ENCODE measurements at regions of chr11 and their contacts with region 1.

Region 1: GRCh38 chr11:35391922-35392813 is 27.2 kb downstream of the SLC1A2 start:
- DNase-seq: peak; percentile 84
- ATAC-seq: peak; percentile 90
- H3K4me3 ChIP-seq: no peak overlapping the region
- H3K27ac ChIP-seq: peak overlapping the region; percentile 81; the same call in 1 of the 2 replicates
- H3K4me1 ChIP-seq: peaks cover 8% of the 10 kb centered on the region
- H3K27me3 ChIP-seq: no peaks in the 10 kb centered on the region
- CTCF ChIP-seq: peak; percentile 91
- POLR2A ChIP-seq: 0 out of 2 replicates have a peak, but pooled peaks have one; percentile 32
- RAD21 ChIP-seq: peak; percentile 98

Region 2: GRCh38 chr11:34366522-34366921 is 1025.6 kb before region 1 on chr11:
- CTCF ChIA-PET with region 1: no interaction called
- POLR2A ChIA-PET with region 1: no interaction called
- dilution Hi-C with region 1: no loop called
- in situ Hi-C with region 1: no loop called
- intact Hi-C with region 1: loop called (anchors 10 kb)
- DNase-seq: no peak
- ATAC-seq: no peak
- H3K4me3 ChIP-seq: no peak overlapping the region
- H3K27ac ChIP-seq: no peak overlapping the region
- H3K4me1 ChIP-seq: no peaks in the 10 kb centered on the region
- H3K27me3 ChIP-seq: peaks cover 19% of the 10 kb centered on the region
- CTCF ChIP-seq: 0 out of 2 replicates have a peak, but pooled peaks have one; percentile 16
- POLR2A ChIP-seq: no peak
- RAD21 ChIP-seq: no peak

Region 3: DNA sequence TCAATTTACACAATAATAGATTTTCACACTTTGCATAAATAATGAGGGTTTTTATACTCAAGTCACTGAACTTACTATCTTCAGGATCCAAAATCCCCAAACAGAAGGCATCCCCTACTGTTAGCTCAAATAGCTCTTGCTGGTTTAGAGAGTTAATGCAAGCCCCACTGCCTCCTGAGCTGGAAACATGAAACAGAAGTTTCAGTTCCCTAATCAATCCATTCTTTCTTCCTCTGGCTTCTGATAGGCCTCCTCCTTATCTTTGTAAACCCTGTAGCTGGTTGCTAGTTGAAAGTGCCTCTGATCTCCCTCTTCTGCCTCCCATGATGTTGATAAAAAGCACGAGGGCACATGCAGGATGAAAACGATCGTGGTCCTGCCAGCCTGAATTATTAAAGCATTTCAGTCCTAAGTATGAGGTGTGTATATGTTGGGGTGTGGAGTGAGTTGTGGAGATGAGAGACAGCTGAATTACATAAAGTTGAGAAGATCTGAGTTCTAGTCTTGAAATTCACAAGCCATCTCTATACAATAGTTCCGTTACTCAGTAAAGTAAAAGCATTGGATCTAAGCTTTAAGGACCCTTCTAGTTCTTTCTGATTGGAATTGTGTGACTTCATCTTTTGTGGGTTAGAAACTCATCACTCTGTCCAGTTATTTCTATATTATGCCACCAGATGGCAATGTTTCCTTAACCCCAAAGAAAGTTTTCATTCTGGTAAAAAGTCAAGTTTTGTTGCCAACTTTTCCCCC is 806.3 kb before region 1 on chr11:
- CTCF ChIA-PET with region 1: no interaction called
- POLR2A ChIA-PET with region 1: no interaction called
- dilution Hi-C with region 1: no loop called
- in situ Hi-C with region 1: no loop called
- intact Hi-C with region 1: loop called (anchors 1 kb)
- DNase-seq: peak; percentile 71
- ATAC-seq: peak; percentile 94
- H3K4me3 ChIP-seq: no peak overlapping the region
- H3K27ac ChIP-seq: no peak overlapping the region
- H3K4me1 ChIP-seq: peaks cover 4% of the 10 kb centered on the region
- H3K27me3 ChIP-seq: peaks cover 7% of the 10 kb centered on the region
- CTCF ChIP-seq: peak; percentile 79
- POLR2A ChIP-seq: no peak
- RAD21 ChIP-seq: peak; percentile 91

Region 4: DNA sequence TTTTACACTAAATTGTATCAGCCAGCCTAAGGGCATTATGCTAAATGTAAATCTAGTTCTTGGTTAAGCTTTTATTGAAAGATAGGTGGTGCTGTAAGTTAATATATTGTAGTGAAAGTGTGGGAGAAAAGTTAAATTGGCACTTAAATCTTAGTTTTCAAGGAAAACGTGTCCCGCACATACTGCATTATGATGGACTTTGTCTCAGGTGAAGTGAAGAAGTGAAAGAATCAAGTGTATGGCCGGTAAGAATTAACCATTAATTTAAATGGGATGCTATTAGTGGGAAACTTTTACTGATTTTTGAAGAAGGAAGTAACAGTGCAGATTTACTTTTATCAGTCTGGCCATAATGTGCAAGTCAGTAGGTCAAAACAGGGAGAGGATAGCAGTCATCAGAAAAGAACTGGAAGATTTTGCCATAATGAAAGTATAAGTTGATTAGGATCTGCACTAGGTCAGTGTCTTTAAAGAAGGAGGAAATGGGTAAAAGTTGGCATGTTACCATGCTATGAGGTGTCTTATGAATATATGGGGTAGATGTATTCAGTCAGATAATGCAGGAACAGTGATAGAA is 394.1 kb before region 1 on chr11:
- CTCF ChIA-PET with region 1: no interaction called
- POLR2A ChIA-PET with region 1: no interaction called
- dilution Hi-C with region 1: no loop called
- in situ Hi-C with region 1: no loop called
- intact Hi-C with region 1: loop called (anchors 1 kb)
- DNase-seq: peak; percentile 58
- ATAC-seq: peak; percentile 63
- H3K4me3 ChIP-seq: no peak overlapping the region
- H3K27ac ChIP-seq: no peak overlapping the region
- H3K4me1 ChIP-seq: peaks cover 2% of the 10 kb centered on the region
- H3K27me3 ChIP-seq: no peaks in the 10 kb centered on the region
- CTCF ChIP-seq: peak; percentile 63
- POLR2A ChIP-seq: no peak
- RAD21 ChIP-seq: peak; percentile 74

Region 5: GRCh38 chr11:35151241-35151640 is 240.9 kb before region 1 on chr11:
- CTCF ChIA-PET with region 1: no interaction called
- POLR2A ChIA-PET with region 1: no interaction called
- dilution Hi-C with region 1: no loop called
- in situ Hi-C with region 1: no loop called
- intact Hi-C with region 1: no loop called
- DNase-seq: no peak
- ATAC-seq: peak; percentile 18; the same call in 1 of the 2 replicates
- H3K4me3 ChIP-seq: no peak overlapping the region
- H3K27ac ChIP-seq: peak overlapping the region; percentile 14; the same call in 1 of the 2 replicates
- H3K4me1 ChIP-seq: peaks cover 27% of the 10 kb centered on the region
- H3K27me3 ChIP-seq: no peaks in the 10 kb centered on the region
- CTCF ChIP-seq: no peak
- POLR2A ChIP-seq: no peak
- RAD21 ChIP-seq: no peak

Region 6: DNA sequence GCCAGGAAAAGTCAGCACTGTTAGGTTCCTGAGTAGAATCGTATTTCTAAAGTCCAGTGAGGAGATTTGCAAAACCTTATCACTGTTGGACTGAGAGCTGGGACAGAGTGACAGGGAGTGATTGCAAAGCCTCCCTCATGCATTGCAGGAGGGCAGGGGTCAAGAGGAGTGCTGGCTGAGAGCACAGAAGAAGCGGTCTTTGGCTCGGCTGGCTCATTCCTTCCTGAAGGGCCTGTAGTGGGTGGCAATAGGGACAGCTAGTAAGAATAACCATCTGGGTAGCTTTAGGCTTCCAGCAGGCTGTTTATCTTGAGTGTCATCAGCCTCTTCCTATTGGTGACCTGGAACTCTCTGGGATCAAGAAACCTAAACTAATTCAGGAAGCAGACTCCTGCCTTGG is 199.8 kb before region 1 on chr11:
- CTCF ChIA-PET with region 1: no interaction called
- POLR2A ChIA-PET with region 1: no interaction called
- dilution Hi-C with region 1: no loop called
- in situ Hi-C with region 1: no loop called
- intact Hi-C with region 1: loop called (anchors 10 kb)
- DNase-seq: peak; percentile 38
- ATAC-seq: peak; percentile 45
- H3K4me3 ChIP-seq: no peak overlapping the region
- H3K27ac ChIP-seq: peak overlapping the region; percentile 64
- H3K4me1 ChIP-seq: peaks cover 28% of the 10 kb centered on the region
- H3K27me3 ChIP-seq: no peaks in the 10 kb centered on the region
- CTCF ChIP-seq: no peak
- POLR2A ChIP-seq: no peak
- RAD21 ChIP-seq: no peak

Region 7: DNA sequence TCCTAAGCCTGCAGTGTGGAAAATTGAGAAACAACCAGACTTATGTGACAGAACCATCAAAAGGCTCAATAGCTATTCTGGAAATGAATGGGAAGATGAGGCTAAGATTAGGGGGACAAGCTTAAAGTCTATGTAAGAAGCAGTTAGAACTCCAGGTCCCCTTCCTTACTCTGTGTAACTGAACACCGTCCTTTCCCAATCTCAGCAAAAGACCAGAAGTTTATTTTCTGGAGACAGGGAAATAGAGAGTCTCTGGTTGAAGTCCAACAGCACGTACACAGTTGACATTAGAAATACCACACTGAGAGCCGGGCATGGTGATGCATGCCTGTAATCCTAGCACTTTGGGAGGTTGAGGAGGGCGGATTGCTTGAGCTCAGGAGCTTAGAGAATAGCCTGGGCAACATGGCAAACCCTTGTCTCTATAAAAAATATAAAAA is 159.3 kb before region 1 on chr11:
- CTCF ChIA-PET with region 1: interaction called, 4 read pairs
- POLR2A ChIA-PET with region 1: no interaction called
- dilution Hi-C with region 1: no loop called
- in situ Hi-C with region 1: loop called (anchors 10 kb)
- intact Hi-C with region 1: loop called (anchors 2 kb)
- DNase-seq: peak; percentile 83
- ATAC-seq: peak; percentile 62
- H3K4me3 ChIP-seq: no peak overlapping the region
- H3K27ac ChIP-seq: peak overlapping the region; percentile 86
- H3K4me1 ChIP-seq: peaks cover 16% of the 10 kb centered on the region
- H3K27me3 ChIP-seq: no peaks in the 10 kb centered on the region
- CTCF ChIP-seq: no peak
- POLR2A ChIP-seq: no peak
- RAD21 ChIP-seq: no peak